ENCODE measurements at regions of chr5 and their contacts with region 1.

Region 1: GRCh38 chr5:141992349-141992963 is 20.4 kb downstream of the GNPDA1 start:
- DNase-seq: peak; percentile 67 to 74 (median 70)
- H3K4me3 ChIP-seq: no peak overlapping the region
- H3K4me3 Mint-ChIP-seq: no peak overlapping the region
- H3K27ac ChIP-seq: no peak overlapping the region
- H3K27ac Mint-ChIP-seq: peak overlapping the region in 3 of 7 donors; percentile 9 to 71 (median 60)
- H3K4me1 ChIP-seq: no peaks in the 10 kb centered on the region
- H3K4me1 Mint-ChIP-seq: peaks cover 3 to 7% (median 4%) of the 10 kb centered on the region in 4 donors
- H3K27me3 ChIP-seq: no peaks in the 10 kb centered on the region
- H3K27me3 Mint-ChIP-seq: no peaks in the 10 kb centered on the region

Region 2: DNA sequence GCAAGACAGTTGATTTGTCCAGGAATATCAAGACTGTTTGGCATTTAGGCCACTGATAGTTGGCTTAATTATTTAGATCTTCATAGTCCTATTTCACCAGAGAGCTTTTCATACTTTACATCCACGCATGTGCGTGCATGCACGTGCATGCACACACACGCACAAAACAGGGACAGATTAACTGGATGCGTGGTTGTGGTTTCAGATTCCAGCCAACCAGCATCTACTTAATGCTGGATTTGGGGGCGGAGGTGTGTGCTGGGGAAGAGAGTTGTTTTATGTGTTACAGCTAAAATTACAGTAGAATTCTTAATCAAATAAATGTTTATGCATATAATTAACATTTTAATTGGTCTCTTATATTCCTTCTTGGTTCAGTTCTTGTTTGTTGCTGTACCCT is 16.3 kb before region 1 on chr5:
- CTCF ChIA-PET with region 1: interaction called, 42 read pairs
- POLR2A ChIA-PET with region 1: interaction called, 4 read pairs
- intact Hi-C with region 1: no loop called
- DNase-seq: no peak
- H3K4me3 ChIP-seq: no peak overlapping the region
- H3K4me3 Mint-ChIP-seq: no peak overlapping the region
- H3K27ac ChIP-seq: no peak overlapping the region
- H3K27ac Mint-ChIP-seq: peak overlapping the region in 2 of 7 donors; percentile 43 to 61
- H3K4me1 ChIP-seq: peaks cover 8% of the 10 kb centered on the region
- H3K4me1 Mint-ChIP-seq: peaks cover 15 to 27% (median 19%) of the 10 kb centered on the region in 4 donors
- H3K27me3 ChIP-seq: no peaks in the 10 kb centered on the region
- H3K27me3 Mint-ChIP-seq: no peaks in the 10 kb centered on the region

Region 3: DNA sequence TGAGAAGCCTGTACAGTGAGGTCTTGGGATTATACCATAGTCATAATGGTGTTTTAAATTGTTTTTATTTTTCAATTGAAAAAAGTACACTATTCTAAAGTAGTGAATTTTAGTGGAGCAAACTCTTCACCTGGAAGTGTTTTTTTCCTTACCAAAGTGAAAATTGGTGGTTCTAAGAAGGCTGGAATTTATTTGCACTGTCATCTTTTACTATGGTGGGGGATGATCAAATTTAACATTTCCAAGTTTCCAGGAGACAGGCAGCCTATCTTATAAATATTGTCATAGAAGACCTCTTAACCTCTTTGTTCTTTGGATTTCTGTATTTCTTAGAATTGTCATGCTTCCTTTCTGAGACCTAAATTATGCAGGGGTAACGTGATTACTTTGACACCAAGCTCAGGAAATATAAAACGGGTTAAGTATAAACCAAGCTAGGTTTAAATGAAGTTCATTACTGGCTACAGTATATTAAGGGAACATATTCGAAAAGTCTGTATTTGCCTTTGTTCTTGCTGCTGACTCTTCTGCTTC is 136.3 kb after region 1 on chr5:
- CTCF ChIA-PET with region 1: interaction called, 16 read pairs
- POLR2A ChIA-PET with region 1: no interaction called
- intact Hi-C with region 1: no loop called
- DNase-seq: no peak
- H3K4me3 ChIP-seq: no peak overlapping the region
- H3K4me3 Mint-ChIP-seq: peak overlapping the region in 4 of 8 donors; percentile 44 to 54 (median 50)
- H3K27ac ChIP-seq: no peak overlapping the region
- H3K27ac Mint-ChIP-seq: peak overlapping the region; percentile 1 to 86 (median 48)
- H3K4me1 ChIP-seq: peaks cover 75% of the 10 kb centered on the region
- H3K4me1 Mint-ChIP-seq: peaks cover 44 to 71% (median 56%) of the 10 kb centered on the region in 4 donors
- H3K27me3 ChIP-seq: no peaks in the 10 kb centered on the region
- H3K27me3 Mint-ChIP-seq: no peaks in the 10 kb centered on the region

Region 4: GRCh38 chr5:142145106-142145900 is 152.8 kb after region 1 on chr5:
- CTCF ChIA-PET with region 1: interaction called, 369 read pairs
- POLR2A ChIA-PET with region 1: interaction called, 4 read pairs
- intact Hi-C with region 1: loop called (anchors 1 kb)
- DNase-seq: peak; percentile 54 to 66 (median 57)
- H3K4me3 ChIP-seq: no peak overlapping the region
- H3K4me3 Mint-ChIP-seq: no peak overlapping the region
- H3K27ac ChIP-seq: no peak overlapping the region
- H3K27ac Mint-ChIP-seq: no peak overlapping the region
- H3K4me1 ChIP-seq: no peaks in the 10 kb centered on the region
- H3K4me1 Mint-ChIP-seq: no peaks in the 10 kb centered on the region
- H3K27me3 ChIP-seq: no peaks in the 10 kb centered on the region
- H3K27me3 Mint-ChIP-seq: no peaks in the 10 kb centered on the region

Region 5: DNA sequence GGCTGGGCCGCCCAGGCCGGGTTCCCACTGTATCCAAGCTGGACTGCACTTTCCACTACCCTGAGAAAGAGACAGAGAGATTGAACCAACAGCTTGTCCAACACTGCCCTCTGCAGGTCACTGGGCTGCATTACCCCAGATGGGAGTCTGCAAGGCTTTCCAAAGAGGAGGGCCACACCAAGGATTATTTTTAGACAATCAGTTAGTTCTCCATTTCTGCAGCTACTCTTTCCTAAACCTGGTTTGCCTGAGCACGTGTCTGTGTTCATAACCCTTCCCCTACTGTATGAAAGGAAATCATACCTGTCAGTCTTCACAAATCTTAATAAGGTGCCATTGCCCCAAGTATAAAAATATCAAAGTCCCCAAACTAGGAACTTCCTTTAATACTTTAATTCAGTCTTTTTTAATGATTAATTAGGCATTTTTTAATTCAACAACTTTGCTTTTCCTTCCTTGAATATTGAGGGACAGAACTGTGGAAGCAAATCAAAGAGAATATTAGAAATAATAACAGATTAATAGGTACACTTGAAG is 706.8 kb after region 1 on chr5:
- CTCF ChIA-PET with region 1: interaction called, 5 read pairs
- POLR2A ChIA-PET with region 1: no interaction called
- intact Hi-C with region 1: loop called (anchors 1 kb)
- DNase-seq: peak; percentile 68 to 73 (median 72)
- H3K4me3 ChIP-seq: no peak overlapping the region
- H3K4me3 Mint-ChIP-seq: no peak overlapping the region
- H3K27ac ChIP-seq: no peak overlapping the region
- H3K27ac Mint-ChIP-seq: no peak overlapping the region
- H3K4me1 ChIP-seq: no peaks in the 10 kb centered on the region
- H3K4me1 Mint-ChIP-seq: peaks cover 0 to 2% (median under 1%) of the 10 kb centered on the region in 4 donors
- H3K27me3 ChIP-seq: no peaks in the 10 kb centered on the region
- H3K27me3 Mint-ChIP-seq: peaks cover 2% of the 10 kb centered on the region in 2 donors